AG04450 (cell line): ENCODE measurements at regions of chr17 and their contacts with region 1.

Region 1: GRCh38 chr17:4236456-4236855 is 27.3 kb downstream of the ANKFY1 start:
- DNase-seq: no peak
- H3K4me3 ChIP-seq: no peak overlapping the region
- H3K27ac ChIP-seq: no peak overlapping the region
- H3K27me3 ChIP-seq: no peaks in the 10 kb centered on the region
- CTCF ChIP-seq: no peak

Region 2: DNA sequence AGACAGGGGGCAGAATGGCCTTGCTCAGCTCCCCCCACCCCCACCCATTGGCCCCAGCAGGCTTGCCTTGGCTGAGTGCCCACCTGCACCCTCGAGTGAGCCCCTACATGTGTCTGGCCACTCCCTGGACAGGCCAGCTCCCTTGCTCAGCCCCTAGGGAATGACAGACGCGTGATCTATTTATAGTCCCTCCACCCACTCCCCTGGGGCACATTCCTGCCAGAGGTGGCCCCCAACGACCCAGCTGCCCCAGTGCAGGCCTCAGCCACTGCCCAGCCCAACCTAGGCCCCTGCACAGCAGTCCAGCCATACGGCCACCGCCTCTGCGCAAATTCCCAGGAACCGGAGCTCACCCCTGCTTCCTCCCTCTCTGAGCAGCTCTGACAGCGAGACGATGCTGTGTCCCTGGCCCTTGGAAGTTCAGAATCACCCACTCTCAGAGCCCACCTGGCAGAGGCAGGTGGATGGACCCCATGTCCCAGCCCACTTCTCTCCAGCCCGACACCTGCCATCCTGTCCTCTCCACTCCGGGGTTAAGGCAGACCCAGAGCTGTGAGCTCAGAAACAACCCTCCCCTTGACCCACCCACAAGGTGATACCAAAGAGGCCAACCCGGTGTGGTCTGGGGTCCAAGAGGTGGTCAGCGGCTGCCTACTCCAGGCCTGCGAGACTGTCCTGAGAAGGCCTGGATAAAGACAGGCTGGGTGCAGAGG is 308.7 kb before region 1 on chr17:
- CTCF ChIA-PET with region 1: no interaction called
- POLR2A ChIA-PET with region 1: no interaction called
- DNase-seq: no peak
- H3K4me3 ChIP-seq: no peak overlapping the region
- H3K27ac ChIP-seq: no peak overlapping the region
- H3K27me3 ChIP-seq: peaks cover 26% of the 10 kb centered on the region
- CTCF ChIP-seq: no peak

Region 3: DNA sequence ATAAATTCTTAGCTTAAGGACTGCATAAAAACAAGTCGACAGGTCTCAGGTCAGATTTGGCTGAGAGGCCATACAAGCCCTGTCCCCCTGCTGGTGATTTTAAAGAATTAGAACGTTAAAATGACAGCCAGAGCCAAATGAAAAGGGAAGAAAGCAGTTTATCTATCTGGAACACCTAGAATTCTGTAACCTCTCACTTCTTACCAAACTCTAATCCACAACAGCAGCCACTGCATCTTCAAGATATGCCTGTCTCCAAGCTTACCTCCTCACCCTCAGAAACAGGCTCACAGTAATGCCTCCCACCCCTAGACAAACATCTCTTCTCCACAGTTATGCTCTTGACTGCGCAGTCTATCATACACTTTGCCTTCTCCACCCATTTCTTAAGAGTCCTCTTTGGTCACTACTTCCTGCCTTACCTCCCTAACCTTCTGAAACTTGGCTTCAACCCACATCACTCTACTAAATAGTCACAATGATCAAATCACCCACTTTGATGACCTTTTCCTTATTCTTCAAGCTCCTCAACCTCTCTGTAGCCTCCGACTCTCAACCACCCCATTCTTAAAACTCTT is 13.1 kb after region 1 on chr17:
- CTCF ChIA-PET with region 1: interaction called, 22 read pairs
- POLR2A ChIA-PET with region 1: interaction called, 3 read pairs
- DNase-seq: no peak
- H3K4me3 ChIP-seq: no peak overlapping the region
- H3K27ac ChIP-seq: no peak overlapping the region
- H3K27me3 ChIP-seq: no peaks in the 10 kb centered on the region
- CTCF ChIP-seq: peak; percentile 63

Region 4: DNA sequence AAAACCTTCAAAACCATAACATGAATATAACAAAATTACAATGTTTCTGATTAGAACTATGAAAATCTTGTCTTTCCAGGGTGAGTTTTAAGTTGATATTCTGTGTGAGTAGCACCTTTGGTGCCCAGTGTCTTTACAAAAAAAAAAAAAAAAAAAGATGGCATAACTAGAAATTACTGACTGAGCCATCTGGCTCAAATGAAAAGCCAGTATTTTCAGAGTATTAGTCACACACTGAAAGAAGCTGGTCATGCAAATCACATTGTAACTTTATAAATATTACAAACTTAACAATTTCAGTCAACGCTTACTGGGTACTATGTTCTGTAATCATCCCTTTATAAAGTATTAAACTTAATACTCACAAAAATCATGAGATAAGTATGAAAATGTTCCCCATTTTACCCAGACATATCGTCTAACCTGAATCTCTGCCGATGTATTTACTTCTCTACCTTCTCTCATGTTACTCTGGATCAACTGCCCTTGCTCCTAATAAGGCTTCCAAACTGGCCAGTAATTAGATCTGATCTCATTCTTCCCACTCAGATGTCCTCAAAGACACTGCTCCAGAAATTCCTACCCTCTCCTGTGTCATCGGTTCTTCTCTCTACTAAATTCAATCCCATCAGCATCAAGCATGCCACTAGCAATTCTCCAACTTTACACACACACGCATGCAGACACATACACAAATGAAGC is 104.6 kb after region 1 on chr17:
- CTCF ChIA-PET with region 1: no interaction called
- POLR2A ChIA-PET with region 1: no interaction called
- DNase-seq: no peak
- H3K4me3 ChIP-seq: no peak overlapping the region
- H3K27ac ChIP-seq: no peak overlapping the region
- H3K27me3 ChIP-seq: no peaks in the 10 kb centered on the region
- CTCF ChIP-seq: no peak